Endothelial cell of umbilical vein (primary cell): ENCODE measurements at regions of chr22 and their contacts with region 1.

Region 1: DNA sequence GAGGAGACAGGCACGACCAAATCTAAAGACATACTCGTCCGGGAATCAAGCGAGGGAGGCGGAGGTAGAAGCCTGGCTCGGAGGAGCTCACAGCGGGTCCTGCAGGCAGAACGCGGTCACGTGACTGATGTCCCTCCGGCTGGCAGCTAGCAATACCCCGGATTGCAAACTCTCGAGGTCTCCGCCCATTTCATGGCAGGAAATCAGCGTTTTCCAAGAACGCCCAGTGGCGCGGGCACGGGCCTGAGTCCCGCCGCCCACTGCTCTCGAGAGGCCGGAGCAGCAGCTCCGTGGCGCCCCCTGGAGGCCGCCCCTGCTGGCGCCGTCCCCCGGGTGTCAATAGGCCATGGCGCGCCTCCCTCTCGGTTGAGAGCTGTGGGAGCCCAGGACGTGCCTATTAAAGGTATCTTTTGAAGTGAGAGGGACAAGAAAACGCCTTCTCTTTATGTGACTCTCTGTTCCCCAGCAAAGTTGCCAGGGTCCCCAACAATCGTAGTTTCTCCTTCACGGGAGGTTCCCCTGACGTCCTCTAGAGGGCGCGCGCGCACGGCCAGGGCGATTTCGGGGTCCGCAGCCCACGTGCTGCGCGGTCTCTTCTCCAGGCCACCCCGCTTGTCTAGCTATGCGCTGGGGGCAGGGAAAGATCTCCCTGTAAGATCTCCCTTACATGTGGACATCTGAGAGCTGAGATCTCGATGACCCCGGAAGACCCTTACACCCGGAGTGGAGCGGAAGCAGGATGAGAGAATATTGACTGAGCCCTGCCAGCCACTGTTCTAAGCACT is 37.3 kb upstream of the RBFOX2 start:
- DNase-seq: peak; percentile 95
- H3K4me3 ChIP-seq: peak overlapping the region; percentile 22 to 69 (median 37)
- H3K27ac ChIP-seq: peak overlapping the region; percentile 54
- H3K4me1 ChIP-seq: peaks cover 9% of the 10 kb centered on the region
- H3K27me3 ChIP-seq: no peaks in the 10 kb centered on the region
- CTCF ChIP-seq: peak; percentile 94 to 100
- POLR2A ChIP-seq: peak; percentile 91

Region 2: DNA sequence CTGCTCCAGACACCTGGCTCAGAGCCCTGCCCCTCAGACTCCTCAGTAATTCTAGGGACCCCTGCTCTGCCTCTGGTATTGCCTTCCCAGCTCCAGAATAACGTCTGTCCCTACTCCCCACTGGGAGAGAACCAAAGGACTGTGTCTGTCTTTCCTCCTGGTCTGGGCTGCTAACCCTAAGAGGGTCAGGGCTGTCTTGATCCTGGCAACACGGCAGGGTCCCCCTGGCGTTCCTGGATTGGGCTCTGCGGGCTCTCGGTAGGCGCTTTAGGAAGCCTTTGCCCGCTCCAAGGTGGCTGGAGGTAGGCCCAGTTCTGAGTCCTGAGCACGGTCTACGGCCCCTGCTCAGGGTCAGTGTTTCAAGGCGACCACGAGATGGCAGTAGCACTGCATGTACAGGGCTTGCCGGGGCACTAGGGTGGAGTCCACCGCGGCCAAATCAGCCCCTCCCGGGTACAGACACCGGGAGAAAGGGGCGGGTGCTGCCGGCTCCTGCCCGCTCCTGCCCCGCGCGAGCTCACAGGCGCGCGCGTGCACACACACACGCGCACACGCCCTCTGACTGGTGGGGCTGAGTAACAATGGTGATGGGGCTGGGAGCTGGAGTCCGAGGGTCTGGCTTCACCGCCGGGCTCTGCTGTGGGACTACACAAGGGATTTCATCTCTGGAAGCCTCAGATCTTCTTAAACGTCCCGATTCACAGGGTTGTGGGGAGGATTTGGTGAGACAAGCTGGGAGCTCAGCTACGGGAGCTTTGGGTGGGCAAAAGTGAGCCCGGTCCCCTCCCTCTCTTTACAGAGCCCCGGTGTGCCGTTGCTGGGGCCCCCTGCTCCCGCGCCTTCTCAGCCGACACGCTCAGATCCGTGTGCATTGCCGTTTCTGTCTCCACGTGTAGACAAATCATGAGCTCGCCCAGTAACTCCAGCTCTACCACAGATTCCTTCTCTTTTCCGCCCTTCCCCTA is 715.1 kb before region 1 on chr22:
- CTCF ChIA-PET with region 1: interaction called, 5 read pairs
- POLR2A ChIA-PET with region 1: no interaction called
- dilution Hi-C with region 1: no loop called
- intact Hi-C with region 1: loop called (anchors 5 kb)
- DNase-seq: peak; percentile 89
- H3K4me3 ChIP-seq: peak overlapping the region; percentile 56 to 75 (median 59)
- H3K27ac ChIP-seq: peak overlapping the region; percentile 70
- H3K4me1 ChIP-seq: peaks cover 14% of the 10 kb centered on the region
- H3K27me3 ChIP-seq: no peaks in the 10 kb centered on the region
- CTCF ChIP-seq: peak; percentile 79 to 90
- POLR2A ChIP-seq: peak; percentile 75

Region 3: GRCh38 chr22:35840302-35840739 is 225.6 kb before region 1 on chr22:
- CTCF ChIA-PET with region 1: interaction called, 23 read pairs
- POLR2A ChIA-PET with region 1: no interaction called
- dilution Hi-C with region 1: no loop called
- intact Hi-C with region 1: loop called (anchors 5 kb)
- DNase-seq: peak; percentile 96
- H3K4me3 ChIP-seq: peak overlapping the region; percentile 57 to 87 (median 80)
- H3K27ac ChIP-seq: peak overlapping the region; percentile 73
- H3K4me1 ChIP-seq: peaks cover 40% of the 10 kb centered on the region
- H3K27me3 ChIP-seq: no peaks in the 10 kb centered on the region
- CTCF ChIP-seq: no peak
- POLR2A ChIP-seq: peak; percentile 52

Region 4: GRCh38 chr22:35952576-35952975 is 113.4 kb before region 1 on chr22:
- CTCF ChIA-PET with region 1: interaction called, 19 read pairs
- POLR2A ChIA-PET with region 1: no interaction called
- dilution Hi-C with region 1: no loop called
- intact Hi-C with region 1: no loop called
- DNase-seq: no peak
- H3K4me3 ChIP-seq: no peak overlapping the region
- H3K27ac ChIP-seq: no peak overlapping the region
- H3K4me1 ChIP-seq: peaks cover 5% of the 10 kb centered on the region
- H3K27me3 ChIP-seq: no peaks in the 10 kb centered on the region
- CTCF ChIP-seq: no peak
- POLR2A ChIP-seq: no peak

Region 5: GRCh38 chr22:35995772-35996171 is 70.2 kb before region 1 on chr22:
- CTCF ChIA-PET with region 1: interaction called, 14 read pairs
- POLR2A ChIA-PET with region 1: no interaction called
- dilution Hi-C with region 1: no loop called
- intact Hi-C with region 1: no loop called
- DNase-seq: peak; percentile 70
- H3K4me3 ChIP-seq: no peak overlapping the region
- H3K27ac ChIP-seq: peak overlapping the region; percentile 11
- H3K4me1 ChIP-seq: peaks cover 24% of the 10 kb centered on the region
- H3K27me3 ChIP-seq: no peaks in the 10 kb centered on the region
- CTCF ChIP-seq: no peak
- POLR2A ChIP-seq: no peak

Region 6: DNA sequence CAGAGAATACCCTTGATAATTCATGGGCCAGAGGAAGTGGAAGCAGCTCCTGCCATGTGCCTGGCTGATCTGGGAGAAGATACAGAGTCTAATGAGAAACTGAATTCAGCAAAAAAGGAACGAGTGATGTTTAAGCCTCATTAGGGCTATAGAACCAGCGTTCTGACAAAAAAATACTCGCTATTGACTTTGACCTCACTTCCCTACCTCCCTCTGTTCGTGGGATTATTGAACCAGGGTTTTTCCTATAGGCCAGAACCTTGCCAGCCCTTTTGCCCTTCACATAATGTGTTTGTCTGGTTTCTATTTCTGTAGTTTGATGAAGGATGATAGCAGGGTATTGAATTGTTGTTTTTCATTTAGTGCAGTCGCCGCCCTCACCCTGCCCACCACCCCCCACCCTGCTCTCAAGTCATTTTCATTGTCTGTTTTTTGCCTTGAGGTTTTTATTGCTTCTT is 29.8 kb before region 1 on chr22:
- CTCF ChIA-PET with region 1: interaction called, 17 read pairs
- POLR2A ChIA-PET with region 1: no interaction called
- dilution Hi-C with region 1: no loop called
- intact Hi-C with region 1: no loop called
- DNase-seq: peak; percentile 38
- H3K4me3 ChIP-seq: no peak overlapping the region
- H3K27ac ChIP-seq: no peak overlapping the region
- H3K4me1 ChIP-seq: peaks cover 2% of the 10 kb centered on the region
- H3K27me3 ChIP-seq: peaks cover 10 to 16% of the 10 kb centered on the region in 2 experiments
- CTCF ChIP-seq: no peak
- POLR2A ChIP-seq: no peak

Region 7: DNA sequence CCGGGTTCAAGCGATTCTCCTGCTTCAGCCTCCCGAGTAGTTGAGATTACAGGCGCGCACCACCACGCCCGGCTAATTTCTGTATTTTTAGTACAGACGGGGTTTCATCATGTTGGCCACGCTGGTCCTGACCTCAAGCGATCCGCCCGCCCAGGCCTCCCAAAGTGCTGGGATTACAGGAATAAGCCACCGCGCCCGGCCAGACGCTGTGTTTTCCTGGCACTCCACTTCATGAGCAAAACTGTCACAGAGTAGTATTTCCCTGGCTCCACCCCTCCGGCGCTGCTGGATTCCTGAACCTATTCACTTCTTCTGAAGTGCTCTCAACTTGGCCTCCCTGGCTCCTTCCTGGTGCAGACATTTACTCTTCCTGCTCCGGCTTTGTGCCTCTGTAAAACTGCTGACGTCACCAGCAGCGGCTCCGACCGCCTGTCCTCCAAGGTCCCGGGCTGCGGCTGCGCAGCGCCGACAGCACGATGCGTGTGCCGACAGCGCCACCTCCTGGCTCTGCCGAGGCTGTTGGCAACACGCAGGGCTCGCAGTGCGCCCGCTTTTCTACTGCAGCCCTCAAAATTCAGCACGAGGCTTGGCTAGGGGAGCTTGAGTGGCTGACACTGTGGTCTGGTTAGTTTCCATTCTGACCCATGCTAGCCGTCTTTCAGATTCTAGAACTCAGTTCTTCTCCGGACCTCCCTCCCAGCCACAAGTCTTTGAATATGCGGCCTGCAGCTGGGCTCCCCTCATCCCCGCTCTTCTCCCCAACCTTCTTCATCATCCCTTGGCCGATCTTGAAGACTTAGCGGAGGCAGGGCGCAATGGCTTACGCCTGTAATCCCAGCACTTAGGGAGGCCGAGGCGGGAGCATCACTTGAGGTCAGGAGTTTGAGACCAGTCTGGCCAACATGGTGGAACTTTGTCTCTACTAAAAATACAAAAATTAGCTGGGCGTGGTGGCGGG is 58.0 kb after region 1 on chr22:
- CTCF ChIA-PET with region 1: interaction called, 21 read pairs
- POLR2A ChIA-PET with region 1: no interaction called
- dilution Hi-C with region 1: no loop called
- intact Hi-C with region 1: loop called (anchors 1 kb)
- DNase-seq: peak; percentile 96
- H3K4me3 ChIP-seq: no peak overlapping the region
- H3K27ac ChIP-seq: peak overlapping the region; percentile 18
- H3K4me1 ChIP-seq: no peaks in the 10 kb centered on the region
- H3K27me3 ChIP-seq: no peaks in the 10 kb centered on the region
- CTCF ChIP-seq: peak; percentile 98 to 99
- POLR2A ChIP-seq: no peak

Region 8: DNA sequence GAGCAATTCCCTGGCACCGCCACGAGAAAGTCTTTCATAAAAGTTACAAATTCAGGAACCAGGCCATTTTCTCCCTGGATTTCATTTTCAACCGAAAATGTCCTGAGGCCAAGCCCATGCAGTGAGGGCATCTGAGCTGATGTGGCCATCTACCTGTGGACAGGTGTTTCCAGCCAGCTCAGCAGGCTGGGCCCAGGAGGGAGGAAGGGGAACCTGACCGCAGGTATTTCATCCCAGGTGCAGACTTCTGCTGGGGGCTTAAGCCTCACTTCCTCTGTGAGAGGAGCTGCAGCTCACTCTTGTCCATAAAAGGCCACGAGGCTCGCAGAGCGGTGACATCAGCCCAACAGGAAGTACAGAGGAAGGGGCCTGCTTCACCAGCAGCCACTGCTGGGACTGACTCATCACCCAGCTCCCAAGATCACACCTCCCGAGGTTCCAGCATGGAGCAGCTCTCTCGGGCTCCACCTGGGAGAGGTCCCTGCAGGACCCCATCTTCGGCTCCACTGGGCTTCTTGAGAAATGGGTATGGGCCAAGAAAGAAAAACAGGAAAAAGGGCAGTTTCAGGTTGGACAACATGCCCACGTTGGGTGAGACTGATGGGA is 265.4 kb after region 1 on chr22:
- CTCF ChIA-PET with region 1: no interaction called
- POLR2A ChIA-PET with region 1: no interaction called
- dilution Hi-C with region 1: no loop called
- intact Hi-C with region 1: no loop called
- DNase-seq: peak; percentile 93
- H3K4me3 ChIP-seq: no peak overlapping the region
- H3K27ac ChIP-seq: peak overlapping the region; percentile 99
- H3K4me1 ChIP-seq: peaks cover 97% of the 10 kb centered on the region
- H3K27me3 ChIP-seq: no peaks in the 10 kb centered on the region
- CTCF ChIP-seq: peak in 1 of 2 donors; percentile 3
- POLR2A ChIP-seq: peak; percentile 67